ENCODE measurements at regions of chr7 and their contacts with region 1.

Region 1: GRCh38 chr7:97027427-97028234 is 3.0 kb upstream of the DLX5 start:
- DNase-seq: peak; percentile 93

Region 2: DNA sequence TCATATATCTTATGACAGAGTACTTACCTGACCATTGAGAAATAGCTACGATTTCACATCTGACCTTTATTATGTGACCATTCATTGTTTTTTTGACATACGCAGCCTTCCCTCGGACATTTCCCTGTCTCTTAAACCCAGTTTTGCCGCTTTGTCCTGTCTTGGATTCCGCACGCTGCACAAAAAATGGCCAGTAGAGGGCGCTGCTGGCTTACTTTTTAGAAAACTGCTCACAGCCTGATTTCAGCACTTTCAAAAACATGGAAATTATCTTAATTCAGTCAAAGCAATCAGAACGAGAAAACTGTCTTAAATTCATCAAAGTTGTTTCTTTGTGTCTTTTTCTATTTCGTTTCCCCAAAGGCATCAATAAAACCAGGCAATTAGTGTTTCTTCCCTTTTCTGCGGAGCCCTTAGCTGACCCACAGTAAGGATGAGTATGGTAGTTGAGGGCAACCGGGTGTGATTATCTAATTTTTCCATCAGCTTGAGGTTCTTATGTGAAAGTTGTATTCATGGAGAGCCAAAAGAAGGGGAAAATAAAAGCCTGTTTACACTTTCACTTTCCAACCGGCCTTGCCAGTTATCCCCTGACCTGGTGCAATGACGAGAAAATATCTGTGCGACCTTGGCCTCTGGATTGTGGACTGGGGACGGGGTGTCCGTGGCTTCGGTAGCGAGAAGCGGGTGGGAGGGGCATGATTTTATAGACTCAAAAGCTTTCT is 1110.9 kb before region 1 on chr7:
- intact Hi-C with region 1: loop called (anchors 10 kb)
- DNase-seq: peak; percentile 93

Region 3: GRCh38 chr7:96061844-96062243 is 965.8 kb before region 1 on chr7:
- intact Hi-C with region 1: loop called in 1 of 2 experiments (anchors 5 kb)
- DNase-seq: no peak

Region 4: DNA sequence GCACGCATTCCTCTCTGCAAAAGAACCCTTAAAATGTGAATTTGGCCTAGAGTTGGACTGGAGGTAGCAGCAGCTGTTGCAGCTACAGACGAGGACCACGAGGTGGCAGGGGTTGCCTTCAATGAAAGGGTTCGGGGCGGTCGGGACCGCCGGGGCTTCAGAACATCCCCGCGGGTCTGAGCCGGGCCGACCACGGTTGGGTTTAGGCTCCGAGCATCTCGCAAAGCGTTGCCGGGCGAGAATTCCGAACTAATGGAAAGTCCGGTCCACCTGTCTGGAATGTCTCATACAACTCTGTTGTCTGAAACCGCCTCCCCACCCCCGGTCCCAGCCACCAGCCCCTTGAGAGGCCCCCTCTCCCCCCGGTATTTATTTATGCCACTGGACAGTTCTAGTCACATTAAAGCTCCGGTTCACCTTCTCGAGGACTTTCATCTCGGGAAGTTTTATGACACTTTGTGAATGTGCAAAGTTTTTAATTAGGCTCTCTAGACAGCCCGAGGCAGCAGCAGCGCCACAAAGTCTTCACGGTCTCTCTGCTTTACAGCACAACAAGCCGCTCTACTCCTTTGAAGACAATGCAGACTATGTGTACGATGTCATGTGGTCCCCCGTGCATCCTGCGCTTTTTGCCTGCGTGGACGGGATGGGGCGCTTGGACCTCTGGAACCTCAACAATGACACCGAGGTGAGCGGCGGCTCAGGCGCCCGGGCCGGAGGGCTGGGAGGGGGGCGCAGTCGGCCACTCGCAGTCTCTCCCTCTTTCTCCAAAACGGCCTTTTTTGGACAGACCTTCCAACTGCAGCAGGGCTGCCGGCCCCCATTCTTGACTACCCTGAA is 951.9 kb before region 1 on chr7:
- intact Hi-C with region 1: loop called in 1 of 2 experiments (anchors 5 kb)
- DNase-seq: peak; percentile 87

Region 5: GRCh38 chr7:96819111-96819700 is 208.4 kb before region 1 on chr7:
- intact Hi-C with region 1: loop called in 1 of 2 experiments (anchors 5 kb)
- DNase-seq: no peak

Region 6: DNA sequence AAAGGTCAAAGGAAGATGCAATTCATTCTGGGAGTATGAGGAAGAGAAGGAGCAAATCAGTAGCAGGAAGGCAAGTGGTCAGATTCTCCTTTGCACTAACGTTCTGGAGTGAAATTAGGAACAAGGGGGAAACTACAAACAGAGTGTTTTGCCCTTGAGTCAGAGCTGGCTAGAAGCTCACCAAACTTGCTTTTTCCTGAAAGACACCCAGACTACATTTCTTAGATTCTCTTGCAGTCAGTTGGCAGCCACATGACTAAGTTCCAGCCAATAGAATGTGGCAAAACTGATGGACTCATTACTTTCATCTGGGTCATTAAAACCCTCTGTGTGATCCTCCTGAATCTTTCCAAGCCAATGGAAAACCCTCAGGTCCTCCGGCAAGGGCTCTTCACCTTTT is 15.7 kb after region 1 on chr7:
- intact Hi-C with region 1: no loop called
- DNase-seq: no peak

Region 7: DNA sequence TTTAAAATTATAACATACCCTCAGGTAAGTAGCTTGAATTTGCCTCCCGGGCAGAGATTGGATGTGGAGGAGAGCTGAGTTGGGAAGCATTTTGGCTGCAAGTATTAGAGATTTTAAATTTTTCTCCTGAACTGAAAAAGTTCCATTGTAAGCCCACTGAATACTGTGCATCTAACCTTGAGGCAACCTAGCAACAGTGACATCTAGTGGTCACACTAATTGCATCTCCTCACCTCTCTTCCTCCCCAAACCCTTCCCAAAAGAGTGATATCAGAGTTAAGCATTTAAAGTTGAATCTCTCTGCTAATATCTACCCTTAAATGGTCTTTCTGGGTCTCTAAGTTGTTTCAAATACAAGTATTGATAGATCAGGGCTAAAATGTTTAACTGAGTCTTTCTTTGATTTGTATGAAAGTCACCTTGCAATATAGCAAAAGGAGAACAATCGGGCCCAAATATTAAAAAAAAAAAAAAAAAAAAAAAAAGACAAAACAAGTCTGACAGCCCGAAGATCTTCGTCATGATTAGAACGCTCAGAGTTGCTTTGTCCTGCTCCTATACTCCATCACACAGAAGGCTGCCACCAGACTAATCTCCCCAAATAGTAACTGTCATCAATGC is 37.4 kb after region 1 on chr7:
- intact Hi-C with region 1: no loop called
- DNase-seq: no peak

Region 8: GRCh38 chr7:97285348-97285747 is 257.7 kb after region 1 on chr7:
- intact Hi-C with region 1: no loop called
- DNase-seq: no peak

Region 9: DNA sequence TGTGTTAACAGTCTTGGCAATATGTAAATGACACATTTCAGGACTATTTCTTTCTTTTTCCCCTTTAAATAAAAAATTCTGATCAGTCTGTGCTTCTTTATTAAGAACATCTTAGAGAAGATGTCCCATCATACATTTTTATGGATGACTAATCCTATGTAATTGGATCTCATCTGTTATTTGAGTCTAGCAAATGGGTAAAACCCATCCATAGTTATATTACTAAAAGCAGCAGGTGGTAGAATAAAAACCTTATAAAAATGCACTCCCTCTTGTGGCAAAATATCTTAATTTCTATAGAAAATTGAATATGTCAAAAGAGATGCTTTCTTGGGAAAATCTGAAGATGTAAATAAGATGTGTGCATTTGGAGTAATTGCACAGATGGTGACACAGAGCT is 1886.0 kb after region 1 on chr7:
- intact Hi-C with region 1: no loop called
- DNase-seq: no peak